ENCODE measurements at regions of chr15 and their contacts with region 1.

Region 1: DNA sequence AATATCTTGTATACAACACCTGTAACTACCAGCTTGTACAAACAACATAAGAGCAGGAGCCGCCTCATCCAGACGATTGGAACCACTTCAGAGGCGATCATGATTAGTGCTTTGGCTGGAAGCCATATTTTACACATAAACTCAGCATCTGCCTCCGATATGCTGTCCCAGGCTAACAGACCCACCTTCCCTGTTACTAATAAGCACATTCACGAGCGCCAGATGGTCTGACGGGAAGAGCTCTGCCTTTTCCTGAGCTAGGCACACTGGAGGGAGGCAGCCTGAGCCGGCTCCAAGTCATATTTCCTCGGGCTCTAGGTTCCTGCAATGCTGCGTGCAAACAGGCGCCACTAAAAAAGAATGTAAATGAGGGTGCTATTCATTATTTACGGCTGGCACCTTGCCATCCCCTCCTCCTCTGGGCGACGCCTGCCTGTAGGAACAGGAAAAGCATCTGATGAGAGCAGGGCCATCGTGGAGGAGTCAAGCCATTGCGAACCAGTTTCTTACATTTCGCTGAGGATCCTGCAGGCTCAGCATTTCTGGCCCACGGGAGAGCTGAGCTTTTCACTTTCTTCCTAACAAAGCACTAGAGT is 98.2 kb downstream of the ANXA2 start:
- DNase-seq: no peak

Region 2: DNA sequence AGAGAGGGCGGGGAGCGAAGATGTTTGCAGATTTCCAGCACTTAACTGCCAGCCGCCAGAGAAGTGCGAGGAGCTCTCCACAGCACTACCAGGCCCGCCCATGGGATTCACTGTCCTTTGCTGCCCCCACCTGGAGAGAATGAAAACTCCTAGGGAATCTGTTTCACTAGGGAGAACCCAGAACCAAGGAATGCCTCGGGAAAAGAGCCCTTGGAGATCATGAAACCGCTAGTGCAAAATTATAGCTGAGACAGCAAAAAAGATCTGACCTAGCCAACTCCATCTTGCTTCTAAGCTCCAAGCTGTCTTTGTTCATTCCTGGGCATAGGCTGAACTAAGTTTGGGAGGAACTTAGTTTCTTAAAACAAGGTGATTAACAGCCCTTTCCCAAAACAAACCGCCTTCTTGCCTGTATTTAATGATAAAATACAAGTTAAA is 770.6 kb before region 1 on chr15:
- in situ Hi-C with region 1: no loop called
- DNase-seq: peak; percentile 75

Region 3: GRCh38 chr15:59741274-59741906 is 558.2 kb before region 1 on chr15:
- in situ Hi-C with region 1: loop called (anchors 25 kb)
- DNase-seq: peak; percentile 24

Region 4: DNA sequence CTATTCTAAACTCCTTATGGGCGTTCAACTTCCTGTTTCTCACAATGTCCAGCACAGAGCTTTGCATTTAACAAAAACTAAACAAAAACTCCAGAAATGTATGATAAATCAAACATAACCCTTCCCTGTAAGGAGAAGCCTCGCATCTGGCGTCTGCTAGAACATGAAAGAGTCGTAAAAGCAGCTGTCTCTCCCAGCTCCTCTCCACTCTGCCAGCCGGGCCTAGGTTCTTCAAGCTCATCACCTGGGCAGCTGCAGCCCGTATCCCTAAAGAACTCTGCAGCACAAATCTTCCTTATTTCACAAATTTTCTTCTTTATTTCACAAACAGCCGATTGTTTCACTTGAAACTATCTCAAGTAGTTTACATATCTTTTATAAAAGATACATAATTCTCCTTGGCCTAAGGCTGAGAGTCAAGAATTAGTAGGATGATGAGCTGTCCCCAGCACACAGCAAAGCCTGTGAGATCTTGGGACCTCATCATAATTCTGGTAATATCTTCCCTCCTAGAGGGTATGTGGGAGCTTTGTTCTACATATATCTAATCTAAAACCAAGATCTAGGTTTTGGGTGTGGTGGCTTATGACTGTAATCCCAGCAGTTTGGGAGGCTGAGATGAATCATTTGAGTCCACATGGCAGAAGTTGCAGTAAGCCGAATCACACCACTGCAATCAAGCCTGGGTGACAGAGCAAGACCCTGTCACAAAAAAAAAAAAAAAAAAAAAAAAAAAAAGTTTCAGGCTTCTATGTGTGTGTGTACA is 63.0 kb after region 1 on chr15:
- in situ Hi-C with region 1: no loop called
- DNase-seq: peak; percentile 11